Body of pancreas (tissue), 4 donors: ENCODE measurements at regions of chr16 and their contacts with region 1.

Region 1: DNA sequence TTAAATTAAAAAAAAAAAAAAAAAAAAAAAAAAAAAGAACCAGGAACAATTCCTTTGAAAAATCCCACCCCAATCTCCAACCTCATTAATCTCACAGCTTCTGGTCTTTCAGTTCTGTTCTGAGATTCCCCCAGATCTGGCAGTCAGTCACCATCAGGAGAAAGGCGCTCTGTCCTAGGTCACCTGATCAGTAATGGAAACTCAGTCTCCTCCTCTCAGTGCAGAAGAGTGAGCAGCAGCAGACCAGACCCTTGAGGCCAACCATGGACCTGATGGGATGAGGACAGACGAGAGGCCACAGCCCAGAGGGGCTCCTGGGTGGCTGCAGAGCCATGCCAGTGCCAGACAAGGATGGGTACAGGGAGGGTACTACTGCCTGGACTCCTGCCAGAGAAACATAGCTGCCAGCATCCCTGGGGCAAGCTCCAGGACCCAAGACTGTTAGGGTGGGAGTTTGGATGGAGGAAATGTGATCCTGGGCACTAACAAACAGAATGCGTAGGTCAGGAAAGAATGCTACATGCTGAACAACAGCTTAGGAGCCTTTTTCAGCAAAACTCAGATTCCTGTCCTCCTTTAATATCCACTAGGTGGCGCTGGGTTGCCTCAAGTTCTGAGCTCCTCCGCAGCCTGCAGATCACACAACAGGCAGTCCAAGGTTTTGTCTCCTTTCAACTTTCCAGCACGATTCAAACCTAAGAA is 28.7 kb downstream of the MPG start:
- DNase-seq: peak; percentile 57 to 80 (median 74)
- ATAC-seq: peak; percentile 80
- H3K4me3 ChIP-seq: no peak overlapping the region
- H3K27ac ChIP-seq: no peak overlapping the region
- H3K4me1 ChIP-seq: peaks cover 12% of the 10 kb centered on the region
- H3K27me3 ChIP-seq: no peaks in the 10 kb centered on the region
- CTCF ChIP-seq: peak; percentile 73 to 83 (median 79)
- POLR2A ChIP-seq: no peak

Region 2: GRCh38 chr16:53346-54236 is 53.2 kb before region 1 on chr16 and contains the starts of genes POLR3K and SNRNP25:
- intact Hi-C with region 1: no loop called
- DNase-seq: peak; percentile 100
- ATAC-seq: peak; percentile 98
- H3K4me3 ChIP-seq: peak within 1 kb of the TSS; percentile 50 to 58
- H3K27ac ChIP-seq: peak within 1 kb of the TSS; percentile 55 to 83 (median 75)
- H3K4me1 ChIP-seq: peaks cover 17% of the 10 kb centered on the region
- H3K27me3 ChIP-seq: no peaks in the 10 kb centered on the region
- CTCF ChIP-seq: no peak
- POLR2A ChIP-seq: peak; percentile 42 to 77 (median 73)
- total RNA-seq, gene POLR3K: 2.6 to 5.6 TPM
- total RNA-seq, gene SNRNP25: 13.2 to 13.5 TPM

Region 3: DNA sequence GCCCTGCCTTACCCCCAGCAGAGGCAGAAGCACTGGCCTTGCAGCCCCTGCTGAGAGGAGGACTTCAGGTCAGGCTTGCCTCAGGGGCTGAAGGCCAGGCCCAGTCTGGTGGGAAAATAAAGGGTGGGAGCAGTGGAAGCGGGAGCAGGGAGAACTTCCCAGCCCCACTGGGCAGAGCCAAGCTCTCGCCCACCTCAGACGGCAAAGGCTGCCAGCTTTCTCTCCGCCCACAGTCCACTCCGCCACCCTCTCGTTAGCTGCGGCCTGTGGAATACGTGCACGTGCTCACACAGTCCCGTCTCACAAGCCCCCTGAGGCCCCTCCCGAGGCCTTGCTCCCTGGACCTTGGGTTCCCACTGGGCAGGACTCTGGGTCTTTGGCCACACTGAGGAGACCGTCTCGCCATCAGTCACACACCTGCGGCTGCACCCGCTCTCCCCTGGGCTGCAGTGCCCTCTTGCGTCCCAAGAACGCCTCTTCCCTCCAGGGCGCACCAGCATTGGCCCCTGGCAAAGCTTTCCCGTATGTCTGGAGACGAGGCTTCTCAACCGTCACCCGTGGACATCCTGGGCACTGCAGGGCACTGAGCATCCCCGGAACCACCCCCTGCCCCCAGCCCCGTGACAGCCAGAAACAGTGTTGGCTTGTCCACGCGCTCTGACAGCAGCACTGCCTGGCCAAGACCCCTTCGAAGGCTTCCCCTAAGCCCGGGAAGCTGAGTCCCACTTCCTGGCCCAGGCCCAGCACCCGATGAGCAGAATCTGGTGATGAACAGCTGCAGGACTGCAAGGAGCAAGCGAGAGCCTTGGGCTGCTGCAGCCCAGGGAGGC is 255.3 kb after region 1 on chr16:
- intact Hi-C with region 1: loop called (anchors 5 kb)
- DNase-seq: peak; percentile 83 to 87 (median 85)
- ATAC-seq: peak; percentile 95
- H3K4me3 ChIP-seq: no peak overlapping the region
- H3K27ac ChIP-seq: no peak overlapping the region
- H3K4me1 ChIP-seq: peaks cover 15% of the 10 kb centered on the region
- H3K27me3 ChIP-seq: no peaks in the 10 kb centered on the region
- CTCF ChIP-seq: peak; percentile 76 to 94 (median 89)
- POLR2A ChIP-seq: no peak